MCF 10A (cell line): ENCODE measurements at regions of chr14 and their contacts with region 1.

Region 1: DNA sequence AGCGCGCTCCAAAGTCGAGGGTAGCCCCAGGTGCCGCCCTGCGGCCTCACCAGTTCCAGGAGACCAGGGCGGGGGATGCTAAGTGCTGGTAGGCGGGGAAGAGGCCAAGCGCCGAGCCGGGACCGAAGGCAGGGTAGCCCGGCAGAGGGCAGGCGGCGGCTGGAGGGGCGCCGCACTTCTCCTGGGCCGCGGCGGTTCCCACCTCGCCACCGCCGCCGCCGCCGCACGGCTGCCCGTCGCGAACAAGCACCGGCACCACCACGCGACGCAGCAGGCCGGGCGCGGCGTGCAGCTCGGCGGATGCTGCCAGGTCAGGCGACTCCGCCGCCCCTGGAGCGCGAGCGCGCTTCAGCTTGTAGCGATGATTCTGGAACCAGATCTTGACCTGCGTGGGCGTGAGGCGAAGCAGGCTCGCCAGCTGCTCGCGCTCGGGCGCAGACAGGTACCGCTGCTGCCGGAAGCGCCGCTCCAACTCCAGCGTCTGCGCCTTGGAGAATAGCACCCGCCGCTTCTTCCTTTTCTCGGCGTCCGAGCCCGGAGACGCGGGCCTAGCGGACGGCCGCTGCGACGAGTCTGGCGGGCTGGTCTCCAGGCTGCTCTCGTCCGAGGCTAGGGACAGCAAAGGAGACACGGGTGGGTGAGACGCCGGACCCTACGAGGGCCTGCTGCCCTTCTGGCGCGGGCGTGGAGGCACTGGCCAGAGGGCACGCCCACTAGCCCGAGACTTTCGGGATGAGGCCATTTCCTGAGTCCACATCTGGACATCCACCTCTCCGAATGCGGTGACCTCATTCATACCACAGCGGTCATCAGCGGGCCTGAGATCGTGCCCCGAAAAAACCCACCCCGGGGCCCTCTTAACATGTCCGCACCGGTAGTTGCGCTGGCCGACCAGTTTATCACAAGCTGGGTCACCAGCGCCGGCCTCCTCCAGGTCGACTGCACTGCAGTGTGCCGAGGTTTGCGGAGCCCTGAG is 1.3 kb downstream of the NKX2-8 start:
- DNase-seq: peak; percentile 65
- H3K4me3 Mint-ChIP-seq: peak overlapping the region; percentile 75
- H3K27ac Mint-ChIP-seq: no peak overlapping the region
- H3K4me1 Mint-ChIP-seq: no peaks in the 10 kb centered on the region
- H3K27me3 Mint-ChIP-seq: no peaks in the 10 kb centered on the region
- CTCF ChIP-seq: no peak

Region 2: GRCh38 chr14:36570065-36570464 is 11.1 kb before region 1 on chr14:
- CTCF ChIA-PET with region 1: interaction called, 5 read pairs
- POLR2A ChIA-PET with region 1: interaction called, 8 read pairs
- intact Hi-C with region 1: loop called (anchors 1 kb)
- DNase-seq: peak; percentile 24
- H3K4me3 Mint-ChIP-seq: no peak overlapping the region
- H3K27ac Mint-ChIP-seq: no peak overlapping the region
- H3K4me1 Mint-ChIP-seq: peaks cover 7% of the 10 kb centered on the region
- H3K27me3 Mint-ChIP-seq: no peaks in the 10 kb centered on the region
- CTCF ChIP-seq: no peak

Region 3: DNA sequence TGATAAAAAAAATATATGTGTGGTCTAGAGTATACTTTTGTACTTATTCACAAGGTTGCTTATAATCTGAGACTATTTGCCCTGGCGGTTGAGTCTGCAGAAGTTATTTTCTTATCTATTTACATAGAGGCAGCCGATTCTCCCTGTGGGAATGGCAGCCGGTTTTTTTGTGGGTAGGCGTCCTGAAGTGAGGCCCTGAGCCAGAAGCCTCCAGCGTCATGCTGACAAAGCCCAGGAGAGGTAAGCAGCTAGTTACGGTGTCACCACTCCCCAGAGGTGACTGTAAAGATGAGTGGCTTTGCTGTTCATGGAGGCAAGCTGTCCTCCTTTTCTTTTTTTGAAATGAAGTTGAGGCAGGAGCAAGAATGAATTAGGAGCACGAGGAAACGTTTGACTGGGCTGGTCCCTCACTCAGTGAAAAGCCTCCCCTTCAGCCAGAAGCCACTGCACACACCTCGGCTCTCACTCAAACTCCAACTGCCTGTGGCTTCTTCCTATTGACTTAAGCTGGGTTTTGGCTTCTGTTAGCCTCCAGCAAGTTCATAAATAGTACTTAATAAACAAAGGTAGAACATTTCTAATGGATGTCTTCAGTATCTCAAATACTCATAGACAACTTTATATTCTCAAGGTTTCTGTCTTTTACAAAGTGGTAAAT is 102.1 kb after region 1 on chr14:
- CTCF ChIA-PET with region 1: no interaction called
- POLR2A ChIA-PET with region 1: no interaction called
- intact Hi-C with region 1: no loop called
- DNase-seq: no peak
- H3K4me3 Mint-ChIP-seq: no peak overlapping the region
- H3K27ac Mint-ChIP-seq: no peak overlapping the region
- H3K4me1 Mint-ChIP-seq: peaks cover 10% of the 10 kb centered on the region
- H3K27me3 Mint-ChIP-seq: no peaks in the 10 kb centered on the region
- CTCF ChIP-seq: no peak